Sigmoid colon (tissue), 7 donors: ENCODE measurements at regions of chrX and their contacts with region 1.

Region 1: GRCh38 chrX:130975947-130976346 is 72.9 kb upstream of the ENOX2 start:
- DNase-seq: no peak
- H3K4me3 ChIP-seq: no peak overlapping the region
- H3K27ac ChIP-seq: no peak overlapping the region
- H3K4me1 ChIP-seq: no peaks in the 10 kb centered on the region
- H3K27me3 ChIP-seq: no peaks in the 10 kb centered on the region
- CTCF ChIP-seq: peak in 2 of 4 experiments; percentile 15 to 44
- EP300 ChIP-seq: no peak
- POLR2A ChIP-seq: no peak

Region 2: DNA sequence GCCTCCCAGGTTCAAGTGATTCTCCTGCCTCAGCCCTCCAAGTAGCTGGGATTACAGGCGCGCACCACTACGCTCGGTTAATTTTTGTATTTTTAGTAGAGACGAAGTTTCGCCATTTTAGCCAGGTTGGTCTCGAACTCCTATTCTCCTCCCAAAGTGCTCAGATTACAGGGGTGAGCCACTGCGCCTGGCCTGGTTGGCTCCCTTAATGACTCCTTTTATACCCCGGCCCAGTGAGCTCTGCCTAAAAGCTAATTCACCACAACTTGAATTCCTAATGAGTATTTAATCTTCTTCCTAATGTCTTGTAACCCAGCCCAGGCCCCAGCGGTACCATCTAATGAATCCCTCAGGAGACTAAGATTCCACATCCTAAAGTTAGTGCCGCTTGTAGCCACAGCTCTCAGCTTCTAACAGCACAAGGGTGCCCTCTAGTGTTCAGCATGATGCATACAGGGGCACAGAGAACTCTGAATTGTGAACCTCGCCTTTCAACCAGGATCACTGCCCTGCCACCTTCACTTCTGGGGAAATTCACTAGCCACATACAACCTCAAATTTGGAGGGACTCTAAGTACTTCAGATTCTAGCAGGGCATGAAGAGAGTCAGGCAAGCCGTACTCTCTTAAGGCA is 657.5 kb after region 1 on chrX:
- intact Hi-C with region 1: loop called (anchors 5 kb)
- DNase-seq: peak; percentile 68
- H3K4me3 ChIP-seq: no peak overlapping the region
- H3K27ac ChIP-seq: no peak overlapping the region
- H3K4me1 ChIP-seq: no peaks in the 10 kb centered on the region
- H3K27me3 ChIP-seq: no peaks in the 10 kb centered on the region
- CTCF ChIP-seq: peak; percentile 33 to 64 (median 38)
- EP300 ChIP-seq: no peak
- POLR2A ChIP-seq: no peak

Region 3: GRCh38 chrX:131677655-131678628 is 702.0 kb after region 1 on chrX:
- intact Hi-C with region 1: loop called (anchors 5 kb)
- DNase-seq: no peak
- H3K4me3 ChIP-seq: no peak overlapping the region
- H3K27ac ChIP-seq: no peak overlapping the region
- H3K4me1 ChIP-seq: no peaks in the 10 kb centered on the region
- H3K27me3 ChIP-seq: no peaks in the 10 kb centered on the region
- CTCF ChIP-seq: peak in 3 of 4 experiments; percentile 12 to 52 (median 29)
- EP300 ChIP-seq: no peak
- POLR2A ChIP-seq: no peak

Region 4: DNA sequence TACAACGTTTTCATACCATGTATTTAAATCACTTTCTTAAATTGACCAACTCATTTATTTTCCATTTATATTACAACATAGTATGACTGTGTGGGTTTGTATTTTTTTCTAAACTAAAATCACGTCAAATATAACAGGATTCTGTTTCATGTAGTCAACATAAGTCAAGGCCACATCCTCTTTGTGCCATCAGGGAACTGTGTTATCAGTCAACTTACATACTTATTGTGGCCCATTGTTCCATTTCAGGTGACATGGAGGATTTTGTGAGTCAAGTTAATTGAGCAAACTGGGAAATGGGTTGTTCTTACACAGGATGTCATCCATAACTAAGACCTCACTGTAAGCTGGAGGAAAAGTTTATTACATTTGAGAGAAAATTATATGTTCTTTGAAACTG is 1083.0 kb after region 1 on chrX:
- intact Hi-C with region 1: no loop called
- DNase-seq: no peak
- H3K4me3 ChIP-seq: no peak overlapping the region
- H3K27ac ChIP-seq: no peak overlapping the region
- H3K4me1 ChIP-seq: no peaks in the 10 kb centered on the region
- H3K27me3 ChIP-seq: no peaks in the 10 kb centered on the region
- CTCF ChIP-seq: no peak
- EP300 ChIP-seq: no peak
- POLR2A ChIP-seq: no peak

Region 5: GRCh38 chrX:132165651-132166050 is 1189.7 kb after region 1 on chrX:
- intact Hi-C with region 1: no loop called
- DNase-seq: no peak
- H3K4me3 ChIP-seq: no peak overlapping the region
- H3K27ac ChIP-seq: no peak overlapping the region
- H3K4me1 ChIP-seq: no peaks in the 10 kb centered on the region
- H3K27me3 ChIP-seq: no peaks in the 10 kb centered on the region
- CTCF ChIP-seq: no peak
- EP300 ChIP-seq: no peak
- POLR2A ChIP-seq: no peak